GM12878 (cell line): ENCODE measurements at regions of chr16 and their contacts with region 1.

Region 1: GRCh38 chr16:48164907-48165726 is 9.3 kb upstream of the ABCC12 start:
- DNase-seq: no peak
- ATAC-seq: peak; percentile 98
- H3K4me3 ChIP-seq: no peak overlapping the region
- H3K27ac ChIP-seq: no peak overlapping the region
- H3K4me1 ChIP-seq: peaks cover 8% of the 10 kb centered on the region; the same call in 1 of the 2 replicates
- H3K27me3 ChIP-seq: no peaks in the 10 kb centered on the region
- CTCF ChIP-seq: peak; percentile 88 to 94 (median 90)
- EP300 ChIP-seq: no peak
- POLR2A ChIP-seq: no peak
- RAD21 ChIP-seq: peak; percentile 93

Region 2: GRCh38 chr16:46830902-46831647 is 1334.0 kb before region 1 on chr16 and contains the start of gene C16orf87:
- CTCF ChIA-PET with region 1: no interaction called
- POLR2A ChIA-PET with region 1: no interaction called
- RAD21 ChIA-PET with region 1: no interaction called
- SMC1A ChIA-PET with region 1: no interaction called
- in situ Hi-C with region 1: no loop called
- intact Hi-C with region 1: loop called (anchors 10 kb)
- DNase-seq: peak; percentile 63
- ATAC-seq: peak; percentile 93
- H3K4me3 ChIP-seq: peak within 1 kb of the TSS; percentile 81
- H3K27ac ChIP-seq: peak within 1 kb of the TSS; percentile 72
- H3K4me1 ChIP-seq: peaks cover 6% of the 10 kb centered on the region; the same call in 1 of the 2 replicates
- H3K27me3 ChIP-seq: no peaks in the 10 kb centered on the region
- CTCF ChIP-seq: no peak
- EP300 ChIP-seq: 0 out of 4 replicates have a peak, but pooled peaks of 1 of the 2 experiments have one; percentile 16
- POLR2A ChIP-seq: peak; percentile 81
- RAD21 ChIP-seq: no peak
- polyA plus RNA-seq, gene C16orf87: 49.0 to 51.8 TPM

Region 3: DNA sequence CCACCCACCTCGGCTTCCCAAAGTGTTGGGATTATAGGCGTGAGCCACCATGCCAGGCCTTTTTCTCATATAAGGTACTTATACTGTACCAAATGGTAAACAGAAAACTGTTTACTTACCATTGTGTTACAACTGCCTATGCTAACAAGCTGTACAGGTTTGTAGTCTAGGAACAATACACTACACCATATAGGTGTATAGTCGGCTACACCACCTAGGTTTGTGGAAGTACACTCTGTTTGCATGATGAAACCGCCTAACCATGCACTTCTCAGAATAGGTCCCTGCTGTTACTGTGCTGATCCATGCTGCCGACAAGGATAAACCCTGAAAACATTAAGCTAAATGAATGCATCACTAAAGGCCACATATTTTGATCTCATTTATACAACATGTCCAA is 1210.6 kb before region 1 on chr16:
- CTCF ChIA-PET with region 1: interaction called, 10 read pairs
- POLR2A ChIA-PET with region 1: no interaction called
- RAD21 ChIA-PET with region 1: interaction called, 4 read pairs
- SMC1A ChIA-PET with region 1: no interaction called
- in situ Hi-C with region 1: loop called (anchors 5 kb)
- intact Hi-C with region 1: no loop called
- DNase-seq: no peak
- ATAC-seq: peak; percentile 22; the same call in 2 of the 3 replicates
- H3K4me3 ChIP-seq: no peak overlapping the region
- H3K27ac ChIP-seq: no peak overlapping the region
- H3K4me1 ChIP-seq: no peaks in the 10 kb centered on the region
- H3K27me3 ChIP-seq: no peaks in the 10 kb centered on the region
- CTCF ChIP-seq: no peak
- EP300 ChIP-seq: no peak
- POLR2A ChIP-seq: no peak
- RAD21 ChIP-seq: no peak

Region 4: DNA sequence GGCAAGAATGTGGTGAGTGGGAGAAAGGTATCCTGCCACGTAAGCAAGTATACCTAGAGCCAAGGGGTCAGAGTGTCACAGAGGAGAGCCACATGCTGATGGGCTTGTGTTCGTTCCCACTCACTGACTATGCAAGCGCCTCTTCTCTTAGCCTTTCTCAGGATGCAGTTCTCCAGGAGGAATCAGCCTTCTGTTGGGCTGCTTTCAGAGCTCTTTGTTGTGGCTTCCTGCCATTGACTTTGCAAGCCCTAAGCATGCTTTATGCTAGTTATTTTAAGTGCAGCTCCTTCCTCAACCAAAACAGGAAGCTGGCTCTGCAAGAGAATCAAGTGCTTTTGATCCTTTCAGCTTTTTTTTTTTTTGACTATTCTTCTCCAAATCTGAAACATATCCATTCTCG is 153.5 kb after region 1 on chr16:
- CTCF ChIA-PET with region 1: no interaction called
- POLR2A ChIA-PET with region 1: no interaction called
- RAD21 ChIA-PET with region 1: no interaction called
- SMC1A ChIA-PET with region 1: no interaction called
- in situ Hi-C with region 1: no loop called
- intact Hi-C with region 1: no loop called
- DNase-seq: peak; percentile 23
- ATAC-seq: peak; percentile 50
- H3K4me3 ChIP-seq: no peak overlapping the region
- H3K27ac ChIP-seq: peak overlapping the region; percentile 2
- H3K4me1 ChIP-seq: peaks cover 8% of the 10 kb centered on the region; the same call in 1 of the 2 replicates
- H3K27me3 ChIP-seq: no peaks in the 10 kb centered on the region
- CTCF ChIP-seq: no peak
- EP300 ChIP-seq: no peak
- POLR2A ChIP-seq: no peak
- RAD21 ChIP-seq: no peak